B cell (primary cell): ENCODE measurements at regions of chr6 and their contacts with region 1.

Region 1: DNA sequence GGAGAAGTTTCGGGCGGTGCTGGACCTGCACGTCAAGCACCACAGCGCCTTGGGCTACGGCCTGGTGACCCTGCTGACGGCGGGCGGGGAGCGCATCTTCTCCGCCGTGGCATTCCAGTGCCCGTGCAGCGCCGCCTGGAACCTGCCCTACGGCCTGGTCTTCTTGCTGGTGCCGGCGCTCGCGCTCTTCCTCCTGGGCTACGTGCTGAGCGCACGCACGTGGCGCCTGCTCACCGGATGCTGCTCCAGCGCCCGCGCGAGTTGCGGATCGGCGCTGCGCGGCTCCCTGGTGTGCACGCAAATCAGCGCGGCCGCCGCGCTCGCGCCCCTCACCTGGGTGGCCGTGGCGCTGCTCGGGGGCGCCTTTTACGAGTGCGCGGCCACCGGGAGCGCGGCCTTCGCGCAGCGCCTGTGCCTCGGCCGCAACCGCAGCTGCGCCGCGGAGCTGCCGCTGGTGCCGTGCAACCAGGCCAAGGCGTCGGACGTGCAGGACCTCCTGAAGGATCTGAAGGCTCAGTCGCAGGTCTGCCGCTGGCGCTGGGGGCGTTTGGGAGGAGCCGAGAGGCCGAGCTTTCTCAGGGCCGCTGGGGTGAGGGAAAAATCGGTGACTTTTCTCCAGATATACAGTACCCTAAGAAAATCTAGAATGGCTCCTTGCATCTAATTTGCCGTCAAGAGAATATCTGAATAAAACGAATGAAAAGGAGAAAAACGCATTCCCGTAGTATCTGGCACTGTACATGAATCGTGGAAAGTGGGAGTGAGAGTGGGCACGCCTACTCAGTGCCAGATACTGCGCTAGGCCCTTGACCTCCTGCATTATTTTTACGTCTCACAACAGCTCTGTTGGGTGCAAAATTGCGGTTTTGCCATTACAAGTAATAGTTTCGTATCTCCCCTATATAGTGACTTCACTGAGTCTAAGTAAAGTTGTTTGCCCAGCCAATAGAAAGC is 1.0 kb downstream of the CALHM6 start:
- DNase-seq: peak; percentile 86
- ATAC-seq: peak; percentile 76
- H3K4me3 ChIP-seq: peak overlapping the region; percentile 30 to 91 (median 71)
- H3K4me3 Mint-ChIP-seq: peak overlapping the region; percentile 93
- H3K27ac ChIP-seq: peak overlapping the region; percentile 86 to 91
- H3K27ac Mint-ChIP-seq: peak overlapping the region; percentile 96
- H3K4me1 ChIP-seq: peaks cover 49 to 50% of the 10 kb centered on the region in 2 donors
- H3K4me1 Mint-ChIP-seq: peaks cover 54% of the 10 kb centered on the region
- H3K27me3 ChIP-seq: no peaks in the 10 kb centered on the region
- H3K27me3 Mint-ChIP-seq: no peaks in the 10 kb centered on the region
- CTCF ChIP-seq: no peak

Region 2: DNA sequence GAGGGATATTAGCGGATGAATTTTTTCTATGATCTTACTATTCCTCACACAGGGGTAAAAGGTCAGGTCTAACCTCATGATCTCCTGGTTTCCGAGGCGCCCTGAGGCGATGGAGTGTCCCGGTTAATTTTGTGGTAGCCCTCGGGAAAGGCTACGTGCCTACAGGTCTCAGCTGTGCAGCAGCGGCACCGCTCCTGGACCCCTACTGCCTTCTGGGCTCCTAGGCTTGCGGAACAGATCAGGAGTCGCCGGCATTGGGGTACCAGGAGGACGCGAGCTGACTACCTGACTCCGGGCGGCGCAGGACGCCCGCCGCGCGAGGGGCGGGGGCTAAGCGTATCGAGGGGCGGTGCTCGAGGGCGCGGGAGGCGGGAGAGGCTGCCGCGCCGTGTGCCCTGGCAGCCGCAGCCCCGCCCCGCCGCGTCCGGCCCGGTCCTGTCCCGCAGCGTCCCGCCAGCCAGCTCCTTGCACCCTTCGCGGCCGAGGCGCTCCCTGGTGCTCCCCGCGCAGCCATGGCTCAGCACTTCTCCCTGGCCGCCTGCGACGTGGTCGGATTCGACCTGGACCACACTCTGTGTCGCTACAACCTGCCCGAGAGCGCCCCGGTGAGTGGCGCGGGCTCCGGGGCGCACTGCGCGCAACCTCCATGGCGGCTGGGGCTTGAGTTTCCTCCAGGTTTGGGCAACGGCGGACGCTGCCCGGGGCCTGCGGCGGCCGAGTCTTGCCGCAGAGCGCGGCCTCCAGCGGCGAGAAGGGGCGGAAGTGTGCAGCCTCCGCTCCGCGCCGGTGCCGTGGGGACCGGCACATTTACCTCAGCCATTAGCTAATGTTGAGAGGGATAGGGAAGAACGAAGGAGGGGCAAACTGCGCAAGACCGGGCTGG is 361.5 kb before region 1 on chr6 and contains the start of gene NT5DC1:
- CTCF ChIA-PET with region 1: no interaction called
- POLR2A ChIA-PET with region 1: no interaction called
- intact Hi-C with region 1: loop called (anchors 10 kb)
- DNase-seq: peak; percentile 91
- ATAC-seq: peak; percentile 89
- H3K4me3 ChIP-seq: peak within 1 kb of the TSS; percentile 66 to 94 (median 85)
- H3K4me3 Mint-ChIP-seq: peak within 1 kb of the TSS; percentile 98
- H3K27ac ChIP-seq: peak within 1 kb of the TSS; percentile 73 to 76
- H3K27ac Mint-ChIP-seq: peak within 1 kb of the TSS; percentile 95
- H3K4me1 ChIP-seq: peaks cover 23 to 25% of the 10 kb centered on the region in 2 donors
- H3K4me1 Mint-ChIP-seq: peaks cover 48% of the 10 kb centered on the region
- H3K27me3 ChIP-seq: no peaks in the 10 kb centered on the region
- H3K27me3 Mint-ChIP-seq: no peaks in the 10 kb centered on the region
- CTCF ChIP-seq: peak; percentile 52
- total RNA-seq, gene NT5DC1: 54.2 and 54.8 TPM in 2 replicates

Region 3: DNA sequence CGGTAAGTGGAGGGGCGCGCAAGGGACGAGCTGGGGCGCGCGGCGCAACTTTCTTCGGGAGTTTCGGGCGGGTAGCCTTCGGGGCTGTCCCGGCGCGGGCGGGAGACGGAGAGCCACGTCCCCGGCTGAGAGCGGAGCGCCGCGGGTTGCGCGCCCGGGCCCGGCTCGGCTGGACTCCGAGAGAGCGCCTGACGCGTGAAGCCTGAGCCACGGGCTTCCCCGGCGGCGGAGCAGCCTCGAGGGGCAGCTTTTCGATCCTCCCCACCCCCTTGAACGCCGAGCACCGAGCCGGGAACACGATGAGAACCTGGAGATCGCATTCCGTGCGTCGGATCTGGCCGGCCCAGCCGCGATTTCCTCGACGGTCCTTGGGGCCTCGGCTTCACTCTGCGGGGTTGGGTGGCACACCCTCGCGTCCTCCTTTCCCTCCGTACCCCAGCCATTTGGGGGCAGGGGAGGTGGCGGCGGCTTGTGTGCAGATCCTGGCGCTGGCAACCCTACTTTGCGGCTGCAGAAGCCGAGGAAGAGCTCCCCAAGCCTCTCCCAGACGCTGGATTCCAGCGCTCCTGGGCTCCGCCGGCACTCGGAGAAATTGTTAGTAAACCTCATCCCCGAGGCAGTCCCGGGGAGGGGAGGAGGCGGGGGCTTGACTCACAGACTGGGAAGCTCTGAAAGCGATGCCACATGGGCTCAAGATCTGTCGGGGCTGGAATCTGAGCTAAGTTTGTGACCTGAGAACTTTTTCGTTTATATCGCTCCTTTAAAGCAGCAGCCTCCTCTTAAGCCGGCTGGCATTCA is 90.9 kb before region 1 on chr6:
- CTCF ChIA-PET with region 1: no interaction called
- POLR2A ChIA-PET with region 1: no interaction called
- intact Hi-C with region 1: loop called (anchors 2 kb)
- DNase-seq: no peak
- ATAC-seq: peak; percentile 37
- H3K4me3 ChIP-seq: peak overlapping the region; percentile 62 to 89 (median 85)
- H3K4me3 Mint-ChIP-seq: peak overlapping the region; percentile 92
- H3K27ac ChIP-seq: peak overlapping the region in 1 of 2 donors; percentile 91
- H3K27ac Mint-ChIP-seq: peak overlapping the region; percentile 85
- H3K4me1 ChIP-seq: peaks cover 28 to 30% of the 10 kb centered on the region in 2 donors
- H3K4me1 Mint-ChIP-seq: peaks cover 30% of the 10 kb centered on the region
- H3K27me3 ChIP-seq: peaks cover 0 to 2% (median 0%) of the 10 kb centered on the region in 4 experiments
- H3K27me3 Mint-ChIP-seq: peaks cover 10% of the 10 kb centered on the region
- CTCF ChIP-seq: no peak

Region 4: GRCh38 chr6:116444092-116444491 is 18.1 kb before region 1 on chr6:
- CTCF ChIA-PET with region 1: interaction called, 9 read pairs
- POLR2A ChIA-PET with region 1: interaction called, 6 read pairs
- intact Hi-C with region 1: loop called (anchors 2 kb)
- DNase-seq: peak; percentile 56
- ATAC-seq: peak; percentile 86
- H3K4me3 ChIP-seq: no peak overlapping the region
- H3K4me3 Mint-ChIP-seq: no peak overlapping the region
- H3K27ac ChIP-seq: no peak overlapping the region
- H3K27ac Mint-ChIP-seq: no peak overlapping the region
- H3K4me1 ChIP-seq: peaks cover 16 to 23% of the 10 kb centered on the region in 2 donors
- H3K4me1 Mint-ChIP-seq: peaks cover 27% of the 10 kb centered on the region
- H3K27me3 ChIP-seq: no peaks in the 10 kb centered on the region
- H3K27me3 Mint-ChIP-seq: no peaks in the 10 kb centered on the region
- CTCF ChIP-seq: peak; percentile 75

Region 5: GRCh38 chr6:116476002-116476678 is 13.9 kb after region 1 on chr6:
- CTCF ChIA-PET with region 1: interaction called, 4 read pairs
- POLR2A ChIA-PET with region 1: interaction called, 3 read pairs
- intact Hi-C with region 1: loop called (anchors 1 kb)
- DNase-seq: peak; percentile 75
- ATAC-seq: peak; percentile 99
- H3K4me3 ChIP-seq: peak overlapping the region; percentile 9 to 63 (median 25)
- H3K4me3 Mint-ChIP-seq: peak overlapping the region; percentile 78
- H3K27ac ChIP-seq: peak overlapping the region; percentile 68 to 72
- H3K27ac Mint-ChIP-seq: peak overlapping the region; percentile 92
- H3K4me1 ChIP-seq: peaks cover 24 to 26% of the 10 kb centered on the region in 2 donors
- H3K4me1 Mint-ChIP-seq: peaks cover 33% of the 10 kb centered on the region
- H3K27me3 ChIP-seq: no peaks in the 10 kb centered on the region
- H3K27me3 Mint-ChIP-seq: no peaks in the 10 kb centered on the region
- CTCF ChIP-seq: no peak

Region 6: DNA sequence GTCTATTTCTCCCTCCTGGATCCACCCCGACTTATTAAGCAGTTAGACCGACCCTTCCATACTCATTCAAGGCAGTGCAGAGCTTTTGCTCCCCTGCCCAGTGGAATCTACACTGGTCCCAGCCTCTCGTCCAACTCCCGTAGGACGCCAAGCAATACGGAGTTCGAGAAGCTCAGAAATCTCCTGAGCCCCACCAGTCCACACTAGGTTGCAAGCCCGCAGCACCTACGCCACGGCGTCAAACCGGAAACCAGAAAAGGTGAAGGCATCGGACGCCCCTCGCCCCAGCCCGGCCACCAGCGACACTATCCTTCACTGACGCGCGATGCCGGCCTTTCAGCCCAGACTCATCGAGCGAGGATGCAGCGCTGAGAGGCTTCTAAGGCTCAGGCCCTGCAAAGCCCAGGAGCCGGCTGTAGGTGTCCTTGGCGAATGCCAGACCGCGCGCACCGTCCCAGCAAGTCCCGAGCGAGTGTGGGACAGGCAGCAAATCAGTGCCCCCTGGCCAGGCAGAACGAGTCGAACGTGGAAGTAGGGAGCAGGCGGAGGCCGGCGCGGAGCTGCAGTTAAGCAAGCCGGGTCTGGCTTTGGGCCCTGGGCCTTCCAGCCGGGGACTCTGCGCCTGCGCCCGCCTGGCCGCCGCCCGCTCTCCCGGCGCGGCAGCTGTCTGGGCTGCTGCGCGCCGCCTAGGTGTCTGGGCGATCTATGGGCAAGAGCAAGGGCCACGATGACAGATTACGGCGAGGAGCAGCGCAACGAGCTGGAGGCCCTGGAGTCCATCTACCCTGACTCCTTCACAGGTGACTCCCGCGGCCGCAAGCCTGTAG is 108.9 kb after region 1 on chr6 and contains the start of gene RWDD1:
- CTCF ChIA-PET with region 1: no interaction called
- POLR2A ChIA-PET with region 1: no interaction called
- intact Hi-C with region 1: loop called (anchors 1 kb)
- DNase-seq: peak; percentile 99
- ATAC-seq: peak; percentile 93
- H3K4me3 ChIP-seq: peak within 1 kb of the TSS; percentile 81 to 93 (median 83)
- H3K4me3 Mint-ChIP-seq: peak within 1 kb of the TSS; percentile 97
- H3K27ac ChIP-seq: peak within 1 kb of the TSS; percentile 93 to 96
- H3K27ac Mint-ChIP-seq: peak within 1 kb of the TSS; percentile 97
- H3K4me1 ChIP-seq: peaks cover 24% of the 10 kb centered on the region in 2 donors
- H3K4me1 Mint-ChIP-seq: peaks cover 40% of the 10 kb centered on the region
- H3K27me3 ChIP-seq: no peaks in the 10 kb centered on the region
- H3K27me3 Mint-ChIP-seq: no peaks in the 10 kb centered on the region
- CTCF ChIP-seq: no peak
- total RNA-seq, gene RWDD1: 21.8 and 22.4 TPM in 2 replicates

Region 7: DNA sequence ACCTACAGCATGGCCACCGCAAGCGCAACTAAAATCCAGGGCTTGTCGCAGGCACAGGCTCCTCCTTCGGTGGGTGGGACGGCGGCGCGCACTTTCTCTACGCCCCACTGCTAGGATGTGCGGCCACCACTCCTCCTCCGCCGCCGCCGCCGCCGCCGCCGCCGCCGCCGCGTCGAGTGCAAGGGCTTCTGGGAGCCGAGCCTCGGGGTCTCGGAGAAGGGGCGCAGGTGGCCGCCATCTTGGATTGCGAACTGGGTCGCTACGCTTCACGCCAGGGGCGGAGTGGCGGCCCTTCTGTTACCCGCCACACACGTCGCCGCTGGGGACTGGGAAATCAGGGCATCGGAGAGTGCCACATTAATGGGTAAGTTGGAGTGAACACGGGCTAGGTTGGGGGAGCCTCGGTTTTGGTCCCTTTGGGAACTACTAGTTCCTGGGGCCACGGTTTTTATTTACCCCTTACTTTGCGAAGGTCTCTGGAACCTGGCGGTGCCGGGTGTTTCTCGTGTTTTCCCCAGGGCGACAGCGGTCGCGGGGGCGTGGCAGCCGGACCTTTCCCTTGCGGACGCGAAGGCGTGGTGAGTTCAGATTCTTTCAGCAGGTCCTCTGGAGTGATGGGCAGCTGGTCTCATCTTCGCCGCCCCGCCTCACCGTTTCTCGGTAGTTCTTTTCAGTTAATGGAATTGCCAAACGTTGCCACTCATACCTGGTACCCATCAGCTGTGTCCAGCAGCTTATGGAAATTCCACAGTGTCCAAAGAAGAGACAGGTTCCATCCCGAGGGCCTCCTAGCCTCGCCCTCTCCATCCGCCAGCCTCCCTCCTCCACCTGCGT is 219.0 kb after region 1 on chr6 and contains the start of gene KPNA5:
- CTCF ChIA-PET with region 1: no interaction called
- POLR2A ChIA-PET with region 1: no interaction called
- intact Hi-C with region 1: loop called (anchors 5 kb)
- DNase-seq: peak; percentile 95
- ATAC-seq: peak; percentile 93
- H3K4me3 ChIP-seq: peak within 1 kb of the TSS; percentile 69 to 89 (median 84)
- H3K4me3 Mint-ChIP-seq: peak within 1 kb of the TSS; percentile 99
- H3K27ac ChIP-seq: peak within 1 kb of the TSS; percentile 83 to 88
- H3K27ac Mint-ChIP-seq: peak within 1 kb of the TSS; percentile 99
- H3K4me1 ChIP-seq: peaks cover 9 to 20% of the 10 kb centered on the region in 2 donors
- H3K4me1 Mint-ChIP-seq: peaks cover 45% of the 10 kb centered on the region
- H3K27me3 ChIP-seq: no peaks in the 10 kb centered on the region
- H3K27me3 Mint-ChIP-seq: no peaks in the 10 kb centered on the region
- CTCF ChIP-seq: no peak
- total RNA-seq, gene KPNA5: 41.7 and 42.9 TPM in 2 replicates

Region 8: DNA sequence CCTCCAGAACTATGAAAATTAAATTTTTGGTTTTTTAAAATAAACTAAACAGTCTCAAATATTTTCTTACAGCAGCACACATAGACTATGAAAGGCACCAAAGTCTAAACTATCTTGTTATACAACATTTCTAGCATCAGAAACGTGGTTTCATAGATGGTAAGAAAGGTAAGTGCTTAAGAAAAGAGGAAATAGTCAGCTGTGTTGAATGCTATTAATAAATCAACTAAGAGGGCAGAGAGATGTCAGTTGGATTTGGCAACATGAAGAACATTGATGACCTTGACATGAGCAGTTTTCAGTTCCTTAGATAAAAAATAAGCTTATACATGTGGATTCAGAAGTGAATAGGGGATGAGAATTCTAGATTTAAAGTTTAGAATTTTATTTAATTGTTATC is 528.5 kb after region 1 on chr6:
- CTCF ChIA-PET with region 1: no interaction called
- POLR2A ChIA-PET with region 1: no interaction called
- intact Hi-C with region 1: no loop called
- DNase-seq: no peak
- ATAC-seq: no peak
- H3K4me3 ChIP-seq: no peak overlapping the region
- H3K4me3 Mint-ChIP-seq: no peak overlapping the region
- H3K27ac ChIP-seq: no peak overlapping the region
- H3K27ac Mint-ChIP-seq: no peak overlapping the region
- H3K4me1 ChIP-seq: no peaks in the 10 kb centered on the region
- H3K4me1 Mint-ChIP-seq: no peaks in the 10 kb centered on the region
- H3K27me3 ChIP-seq: no peaks in the 10 kb centered on the region
- H3K27me3 Mint-ChIP-seq: no peaks in the 10 kb centered on the region
- CTCF ChIP-seq: no peak